ENCODE measurements at regions of chr4 and their contacts with region 1.

Region 1: DNA sequence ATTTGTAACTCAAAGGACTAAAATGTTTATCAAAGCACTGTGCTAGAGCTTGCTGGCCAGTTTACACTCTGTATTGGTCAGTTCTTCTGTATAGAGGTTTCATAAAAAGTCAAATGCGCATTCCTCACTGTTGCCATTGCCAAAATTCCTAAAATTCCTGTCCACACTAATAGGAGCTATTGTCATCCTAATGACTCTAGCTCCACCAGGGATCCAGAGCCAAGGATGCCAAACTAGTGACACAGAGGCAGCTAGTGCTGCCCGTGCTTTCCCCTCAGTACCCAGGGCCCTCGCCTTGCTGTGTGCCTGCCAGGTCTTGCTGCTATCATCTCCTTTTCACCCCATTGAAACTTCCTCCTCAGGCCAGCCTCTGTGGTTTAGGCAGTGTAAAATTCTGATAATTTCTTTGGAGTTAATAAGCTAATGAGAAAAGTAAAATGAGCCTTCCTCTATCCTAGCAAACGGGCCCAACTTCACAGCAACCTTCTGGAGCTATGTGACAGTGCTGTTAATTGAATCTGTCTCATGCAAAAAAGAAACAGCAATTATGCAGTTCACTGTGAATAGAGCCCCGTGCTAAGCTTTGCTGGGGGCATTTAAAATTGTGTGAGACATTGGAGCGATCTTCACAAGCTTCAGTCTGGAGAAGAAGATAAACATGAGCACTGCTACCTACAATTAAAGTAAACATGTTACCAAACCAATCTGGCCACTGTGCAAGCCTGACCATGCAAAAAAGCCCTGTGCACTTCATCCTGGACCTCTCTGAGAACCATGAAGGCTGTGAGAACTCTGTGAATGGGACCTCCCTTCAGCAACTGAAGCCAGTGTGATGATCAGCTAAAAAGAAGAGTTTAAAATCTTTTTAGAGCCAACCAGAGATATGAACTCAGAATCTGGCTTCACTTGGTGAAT is 43.1 kb upstream of the FGF2 start:
- DNase-seq: no peak
- ATAC-seq: no peak
- H3K4me3 Mint-ChIP-seq: no peak overlapping the region
- H3K27ac Mint-ChIP-seq: no peak overlapping the region
- H3K4me1 Mint-ChIP-seq: peaks cover 17% of the 10 kb centered on the region
- H3K27me3 Mint-ChIP-seq: peaks cover 2% of the 10 kb centered on the region

Region 2: GRCh38 chr4:122658818-122659295 is 124.7 kb before region 1 on chr4:
- CTCF ChIA-PET with region 1: no interaction called
- POLR2A ChIA-PET with region 1: no interaction called
- intact Hi-C with region 1: loop called in 1 of 2 experiments (anchors 5 kb)
- DNase-seq: no peak
- ATAC-seq: peak; percentile 86
- H3K4me3 Mint-ChIP-seq: peak overlapping the region; percentile 42
- H3K27ac Mint-ChIP-seq: peak overlapping the region; percentile 98
- H3K4me1 Mint-ChIP-seq: peaks cover 61% of the 10 kb centered on the region
- H3K27me3 Mint-ChIP-seq: no peaks in the 10 kb centered on the region

Region 3: GRCh38 chr4:122814426-122814825 is 30.9 kb after region 1 on chr4:
- CTCF ChIA-PET with region 1: no interaction called
- POLR2A ChIA-PET with region 1: no interaction called
- intact Hi-C with region 1: loop called in 1 of 2 experiments (anchors 1 kb)
- DNase-seq: peak; percentile 19
- ATAC-seq: peak; percentile 99
- H3K4me3 Mint-ChIP-seq: no peak overlapping the region
- H3K27ac Mint-ChIP-seq: no peak overlapping the region
- H3K4me1 Mint-ChIP-seq: peaks cover 11% of the 10 kb centered on the region
- H3K27me3 Mint-ChIP-seq: peaks cover 16% of the 10 kb centered on the region

Region 4: DNA sequence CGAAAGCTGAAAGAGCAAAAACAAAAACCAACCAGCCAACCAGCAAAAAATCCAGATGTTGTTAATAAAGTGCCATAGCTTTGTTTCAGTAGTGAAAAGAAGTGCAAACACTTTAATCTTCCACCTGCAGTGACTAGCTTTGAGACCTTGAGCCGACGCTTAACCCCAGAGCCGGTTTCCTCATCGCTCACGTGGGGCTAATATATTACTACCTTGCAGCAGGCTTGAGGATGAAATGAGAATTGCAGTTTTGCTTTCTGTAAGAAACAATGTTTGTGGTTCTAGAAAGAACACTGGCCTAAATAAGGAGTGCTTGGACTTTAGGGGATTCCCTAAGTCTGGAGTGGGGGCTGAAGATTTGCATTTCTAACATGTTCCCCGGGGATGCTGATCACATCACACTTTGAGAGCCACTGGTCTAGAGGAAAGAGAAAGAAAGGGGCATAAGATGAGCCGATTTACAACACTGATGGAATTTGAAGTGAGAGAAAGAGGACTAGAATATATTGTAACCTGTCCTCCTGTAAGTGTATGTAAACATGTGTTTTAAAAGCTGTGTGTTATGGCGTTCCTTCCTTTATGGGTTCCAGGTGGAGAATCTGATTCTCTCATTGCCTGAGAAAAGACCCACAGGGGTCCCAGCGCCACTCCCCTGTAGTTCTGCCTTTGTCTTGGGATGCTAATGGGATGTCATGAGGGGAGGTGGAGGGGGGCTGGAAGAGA is 44.5 kb after region 1 on chr4:
- CTCF ChIA-PET with region 1: no interaction called
- POLR2A ChIA-PET with region 1: no interaction called
- intact Hi-C with region 1: loop called in 1 of 2 experiments (anchors 1 kb)
- DNase-seq: peak; percentile 70
- ATAC-seq: peak; percentile 89
- H3K4me3 Mint-ChIP-seq: peak overlapping the region; percentile 75
- H3K27ac Mint-ChIP-seq: peak overlapping the region; percentile 40
- H3K4me1 Mint-ChIP-seq: peaks cover 12% of the 10 kb centered on the region
- H3K27me3 Mint-ChIP-seq: peaks cover 70% of the 10 kb centered on the region